Prostate gland (tissue), 2 donors: ENCODE measurements at regions of chr10 and their contacts with region 1.

Region 1: GRCh38 chr10:59625721-59626522 is 83.7 kb downstream of the SLC16A9 start:
- DNase-seq: peak; percentile 40
- H3K4me3 ChIP-seq: no peak overlapping the region
- H3K27ac ChIP-seq: no peak overlapping the region
- H3K4me1 ChIP-seq: no peaks in the 10 kb centered on the region
- H3K27me3 ChIP-seq: no peaks in the 10 kb centered on the region
- CTCF ChIP-seq: peak; percentile 57 to 94 (median 88)
- POLR2A ChIP-seq: no peak

Region 2: DNA sequence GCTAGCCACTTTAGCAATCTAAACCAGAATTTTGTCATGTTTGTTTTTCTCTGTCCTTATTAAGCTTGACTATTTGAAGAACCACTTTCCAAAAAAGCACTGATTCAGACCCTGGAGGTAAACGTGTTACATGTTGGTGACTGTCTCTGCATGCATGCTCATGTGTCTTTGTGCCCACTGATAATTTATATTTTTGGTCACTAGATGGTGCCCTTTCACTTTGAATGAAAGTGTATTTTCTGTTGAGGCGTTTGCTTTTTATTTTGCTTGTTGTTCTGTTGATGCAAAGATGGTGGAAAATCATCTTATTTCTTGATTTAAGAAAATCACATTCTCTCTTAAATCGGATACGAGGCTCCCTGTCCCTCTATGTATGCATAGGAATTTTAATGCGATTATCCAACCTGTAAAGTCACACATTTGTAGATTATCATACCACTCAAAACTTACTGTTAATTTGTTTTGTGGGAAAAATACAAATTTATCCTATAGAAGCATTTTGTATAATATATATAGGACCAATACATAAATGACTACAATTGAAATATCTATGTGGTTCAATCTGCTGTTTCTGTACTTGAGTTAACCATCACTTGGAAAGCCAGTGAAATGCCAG is 843.9 kb before region 1 on chr10:
- intact Hi-C with region 1: loop called (anchors 5 kb)
- DNase-seq: peak; percentile 47
- H3K4me3 ChIP-seq: no peak overlapping the region
- H3K27ac ChIP-seq: no peak overlapping the region
- H3K4me1 ChIP-seq: no peaks in the 10 kb centered on the region
- H3K27me3 ChIP-seq: no peaks in the 10 kb centered on the region
- CTCF ChIP-seq: peak; percentile 40 to 68 (median 62)
- POLR2A ChIP-seq: no peak

Region 3: GRCh38 chr10:59240582-59241183 is 385.2 kb before region 1 on chr10:
- intact Hi-C with region 1: loop called (anchors 2 kb)
- DNase-seq: peak; percentile 12
- H3K4me3 ChIP-seq: no peak overlapping the region
- H3K27ac ChIP-seq: peak overlapping the region; percentile 12 to 41
- H3K4me1 ChIP-seq: no peaks in the 10 kb centered on the region
- H3K27me3 ChIP-seq: no peaks in the 10 kb centered on the region
- CTCF ChIP-seq: peak; percentile 56 to 90 (median 80)
- POLR2A ChIP-seq: no peak

Region 4: GRCh38 chr10:59829601-59830000 is 203.7 kb after region 1 on chr10:
- intact Hi-C with region 1: loop called (anchors 5 kb)
- DNase-seq: no peak
- H3K4me3 ChIP-seq: no peak overlapping the region
- H3K27ac ChIP-seq: no peak overlapping the region
- H3K4me1 ChIP-seq: no peaks in the 10 kb centered on the region
- H3K27me3 ChIP-seq: no peaks in the 10 kb centered on the region
- CTCF ChIP-seq: no peak
- POLR2A ChIP-seq: no peak

Region 5: DNA sequence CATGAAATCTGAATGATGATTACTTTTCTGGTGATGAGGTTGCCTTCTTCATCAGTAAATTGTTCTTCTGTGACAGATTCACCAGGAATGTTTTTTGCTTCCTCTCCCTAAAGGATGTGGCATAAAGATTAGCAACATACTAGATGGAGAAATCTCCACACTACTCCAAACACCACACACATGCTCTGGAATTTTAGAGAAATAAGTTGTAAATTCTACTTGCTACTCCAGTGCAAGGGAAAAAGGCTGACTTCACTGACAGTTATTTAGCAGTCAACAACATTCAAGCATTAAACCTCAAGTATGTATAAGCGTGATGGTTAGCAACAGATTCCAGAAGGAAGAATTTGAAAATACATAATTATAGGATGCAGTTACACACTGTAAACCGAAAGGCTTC is 418.3 kb after region 1 on chr10:
- intact Hi-C with region 1: loop called (anchors 5 kb)
- DNase-seq: no peak
- H3K4me3 ChIP-seq: no peak overlapping the region
- H3K27ac ChIP-seq: no peak overlapping the region
- H3K4me1 ChIP-seq: no peaks in the 10 kb centered on the region
- H3K27me3 ChIP-seq: no peaks in the 10 kb centered on the region
- CTCF ChIP-seq: no peak
- POLR2A ChIP-seq: no peak